ENCODE measurements at regions of chr7 and their contacts with region 1.

Region 1: DNA sequence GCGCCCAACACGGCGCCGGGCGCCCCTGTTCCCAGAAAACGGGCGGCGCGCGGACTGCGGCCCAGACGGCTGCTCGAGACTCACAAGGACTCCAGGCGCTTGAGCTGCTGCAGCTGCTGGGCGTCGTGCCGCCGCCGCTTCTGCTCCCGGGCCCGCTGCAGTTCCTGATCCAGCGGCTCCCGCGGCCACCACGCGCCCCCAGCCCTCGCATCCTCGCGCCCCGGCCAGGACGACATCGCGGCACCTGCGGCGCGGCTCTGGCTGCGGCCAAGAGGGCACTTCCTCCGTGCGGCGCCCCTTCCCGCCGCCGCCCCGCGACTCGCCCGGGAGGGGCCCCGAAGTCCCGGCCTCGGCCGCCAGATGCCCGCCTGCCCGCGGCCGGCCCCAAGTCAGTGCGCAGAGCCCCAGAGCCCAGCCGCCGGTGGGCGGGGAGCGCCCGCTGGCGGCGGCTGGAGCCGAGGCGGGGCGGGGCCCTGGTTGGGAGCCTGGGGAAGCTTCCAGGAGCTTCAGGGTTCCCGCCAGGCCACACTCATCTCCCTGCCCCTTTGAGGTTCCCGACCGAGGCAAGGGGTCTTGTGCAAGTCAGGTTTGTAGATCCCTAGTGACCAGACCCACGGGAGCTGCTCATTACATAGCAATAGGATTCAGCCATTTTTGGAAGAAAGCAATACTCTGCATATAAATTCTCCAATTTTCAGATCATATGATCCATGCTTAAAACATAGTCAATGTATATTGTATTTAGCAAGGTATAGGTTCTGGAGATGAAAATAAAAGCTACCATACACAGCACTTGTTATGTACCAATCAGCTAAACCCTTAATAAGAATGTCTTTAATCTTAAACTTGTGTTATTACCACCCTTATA is 14.2 kb upstream of the FKBP9 start:
- DNase-seq: peak; percentile 51 to 70 (median 63)
- H3K4me3 ChIP-seq: peak overlapping the region; percentile 8 to 62
- H3K4me3 Mint-ChIP-seq: peak overlapping the region; percentile 68 to 88 (median 76)
- H3K27ac ChIP-seq: peak overlapping the region; percentile 32
- H3K27ac Mint-ChIP-seq: peak overlapping the region in 3 of 7 donors; percentile 17 to 48 (median 35)
- H3K4me1 ChIP-seq: peaks cover 9% of the 10 kb centered on the region
- H3K4me1 Mint-ChIP-seq: peaks cover 5 to 11% (median 7%) of the 10 kb centered on the region in 4 donors
- H3K27me3 ChIP-seq: no peaks in the 10 kb centered on the region
- H3K27me3 Mint-ChIP-seq: peaks cover 2 to 5% of the 10 kb centered on the region in 2 donors

Region 2: DNA sequence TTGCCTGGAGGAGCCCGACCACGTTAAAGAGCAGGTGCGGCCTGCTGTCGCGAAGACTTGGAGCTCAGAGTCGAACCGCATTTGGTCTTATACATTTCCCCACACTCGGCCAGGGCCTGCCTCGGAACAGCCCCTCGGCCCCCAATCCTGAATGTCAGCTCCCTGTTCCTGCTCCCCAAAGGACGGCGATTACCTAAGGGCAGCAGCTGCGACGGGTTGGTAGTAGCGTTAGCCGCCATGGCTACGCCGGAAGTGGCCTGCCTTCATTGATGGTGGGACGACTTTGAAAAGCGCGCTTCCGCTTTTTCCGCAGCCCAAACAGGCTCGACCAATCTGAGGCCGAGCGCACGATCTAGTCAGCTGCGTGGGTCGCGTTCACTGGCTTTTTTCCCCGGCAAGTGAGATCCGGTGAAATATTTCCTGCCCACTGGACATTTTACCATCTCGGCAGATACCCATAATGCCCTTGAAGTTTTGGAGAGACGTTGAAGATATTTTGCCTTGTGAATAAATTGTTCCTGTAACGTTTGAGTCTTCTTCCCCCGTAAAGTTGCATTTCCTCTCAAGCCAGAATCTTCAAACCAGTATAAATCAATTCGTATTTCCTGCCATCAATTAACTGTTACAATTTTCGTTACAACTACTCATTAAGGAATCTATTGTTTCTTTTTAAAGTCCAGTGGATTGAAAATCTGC is 452.7 kb before region 1 on chr7 and contains the start of gene LSM5:
- CTCF ChIA-PET with region 1: interaction called, 3 read pairs
- POLR2A ChIA-PET with region 1: interaction called, 4 read pairs
- intact Hi-C with region 1: loop called (anchors 2 kb)
- DNase-seq: peak; percentile 89 to 92 (median 90)
- H3K4me3 ChIP-seq: peak within 1 kb of the TSS; percentile 67 to 96
- H3K4me3 Mint-ChIP-seq: peak within 1 kb of the TSS; percentile 82 to 96 (median 92)
- H3K27ac ChIP-seq: peak within 1 kb of the TSS; percentile 79
- H3K27ac Mint-ChIP-seq: peak within 1 kb of the TSS; percentile 92 to 97 (median 94)
- H3K4me1 ChIP-seq: peaks cover 27% of the 10 kb centered on the region
- H3K4me1 Mint-ChIP-seq: peaks cover 7 to 30% (median 22%) of the 10 kb centered on the region in 4 donors
- H3K27me3 ChIP-seq: no peaks in the 10 kb centered on the region
- H3K27me3 Mint-ChIP-seq: no peaks in the 10 kb centered on the region
- total RNA-seq, gene LSM5: 37.6 to 37.8 TPM

Region 3: DNA sequence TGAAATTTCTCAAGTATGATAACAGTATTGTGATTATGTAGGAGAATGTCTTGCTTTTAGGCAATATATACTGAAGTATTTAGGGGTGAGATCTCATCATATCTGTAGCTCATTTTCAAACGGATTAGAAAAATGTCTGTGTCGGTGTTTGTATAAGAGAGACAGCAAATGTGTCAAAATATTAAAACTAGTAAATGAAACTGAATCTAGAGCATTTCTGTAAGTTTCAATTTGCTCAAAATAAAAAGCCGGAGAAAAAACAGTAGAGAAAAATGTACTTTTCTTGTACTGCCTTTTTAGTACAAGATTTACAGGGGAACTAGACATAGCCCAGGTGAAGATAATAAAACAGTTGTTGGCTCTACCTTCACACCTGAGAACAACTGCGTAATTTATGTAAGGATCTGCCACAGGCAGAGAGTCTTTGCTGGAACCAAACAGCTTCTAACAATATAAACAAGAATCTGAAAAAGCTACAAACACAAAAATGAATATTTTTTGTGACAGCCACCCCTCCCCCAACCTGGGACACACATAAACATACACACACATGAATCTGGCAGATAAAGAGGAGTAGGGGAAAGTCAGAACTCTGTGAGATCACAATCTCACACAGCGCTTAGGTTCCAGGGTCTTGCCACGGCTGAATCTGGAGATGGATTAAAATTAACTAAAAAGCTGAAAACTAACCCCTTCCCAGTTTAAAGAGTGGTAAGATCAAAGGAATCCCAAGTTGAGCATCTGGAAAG is 294.4 kb before region 1 on chr7:
- CTCF ChIA-PET with region 1: no interaction called
- POLR2A ChIA-PET with region 1: no interaction called
- intact Hi-C with region 1: no loop called
- DNase-seq: no peak
- H3K4me3 ChIP-seq: no peak overlapping the region
- H3K4me3 Mint-ChIP-seq: no peak overlapping the region
- H3K27ac ChIP-seq: no peak overlapping the region
- H3K27ac Mint-ChIP-seq: no peak overlapping the region
- H3K4me1 ChIP-seq: no peaks in the 10 kb centered on the region
- H3K4me1 Mint-ChIP-seq: no peaks in the 10 kb centered on the region
- H3K27me3 ChIP-seq: no peaks in the 10 kb centered on the region
- H3K27me3 Mint-ChIP-seq: peaks cover 11 to 23% of the 10 kb centered on the region in 2 donors

Region 4: GRCh38 chr7:32694182-32694581 is 248.8 kb before region 1 on chr7:
- CTCF ChIA-PET with region 1: interaction called, 5 read pairs
- POLR2A ChIA-PET with region 1: no interaction called
- intact Hi-C with region 1: loop called (anchors 10 kb)
- DNase-seq: no peak
- H3K4me3 ChIP-seq: no peak overlapping the region
- H3K4me3 Mint-ChIP-seq: no peak overlapping the region
- H3K27ac ChIP-seq: no peak overlapping the region
- H3K27ac Mint-ChIP-seq: no peak overlapping the region
- H3K4me1 ChIP-seq: no peaks in the 10 kb centered on the region
- H3K4me1 Mint-ChIP-seq: peaks cover 1 to 11% (median 7%) of the 10 kb centered on the region in 4 donors
- H3K27me3 ChIP-seq: no peaks in the 10 kb centered on the region
- H3K27me3 Mint-ChIP-seq: peaks cover 0 to 7% of the 10 kb centered on the region in 2 donors

Region 5: GRCh38 chr7:32765185-32765584 is 177.8 kb before region 1 on chr7:
- CTCF ChIA-PET with region 1: interaction called, 6 read pairs
- POLR2A ChIA-PET with region 1: no interaction called
- intact Hi-C with region 1: loop called (anchors 1 kb)
- DNase-seq: no peak
- H3K4me3 ChIP-seq: no peak overlapping the region
- H3K4me3 Mint-ChIP-seq: no peak overlapping the region
- H3K27ac ChIP-seq: no peak overlapping the region
- H3K27ac Mint-ChIP-seq: no peak overlapping the region
- H3K4me1 ChIP-seq: no peaks in the 10 kb centered on the region
- H3K4me1 Mint-ChIP-seq: peaks cover 5 to 15% (median 7%) of the 10 kb centered on the region in 4 donors
- H3K27me3 ChIP-seq: peaks cover 4% of the 10 kb centered on the region
- H3K27me3 Mint-ChIP-seq: peaks cover 37 to 42% of the 10 kb centered on the region in 2 donors

Region 6: GRCh38 chr7:32803406-32804141 is 139.4 kb before region 1 on chr7:
- CTCF ChIA-PET with region 1: interaction called, 12 read pairs
- POLR2A ChIA-PET with region 1: no interaction called
- intact Hi-C with region 1: loop called (anchors 1 kb)
- DNase-seq: no peak
- H3K4me3 ChIP-seq: no peak overlapping the region
- H3K4me3 Mint-ChIP-seq: no peak overlapping the region
- H3K27ac ChIP-seq: no peak overlapping the region
- H3K27ac Mint-ChIP-seq: no peak overlapping the region
- H3K4me1 ChIP-seq: no peaks in the 10 kb centered on the region
- H3K4me1 Mint-ChIP-seq: no peaks in the 10 kb centered on the region
- H3K27me3 ChIP-seq: no peaks in the 10 kb centered on the region
- H3K27me3 Mint-ChIP-seq: peaks cover 0 to 1% of the 10 kb centered on the region in 2 donors

Region 7: GRCh38 chr7:32905175-32905662 is 37.8 kb before region 1 on chr7:
- CTCF ChIA-PET with region 1: interaction called, 19 read pairs
- POLR2A ChIA-PET with region 1: interaction called, 3 read pairs
- intact Hi-C with region 1: no loop called
- DNase-seq: peak; percentile 81 to 90 (median 87)
- H3K4me3 ChIP-seq: peak overlapping the region in 1 of 2 donors; percentile 46
- H3K4me3 Mint-ChIP-seq: peak overlapping the region; percentile 82 to 91 (median 86)
- H3K27ac ChIP-seq: peak overlapping the region; percentile 44
- H3K27ac Mint-ChIP-seq: peak overlapping the region; percentile 94 to 99 (median 98)
- H3K4me1 ChIP-seq: peaks cover 21% of the 10 kb centered on the region
- H3K4me1 Mint-ChIP-seq: peaks cover 10 to 20% (median 15%) of the 10 kb centered on the region in 4 donors
- H3K27me3 ChIP-seq: no peaks in the 10 kb centered on the region
- H3K27me3 Mint-ChIP-seq: no peaks in the 10 kb centered on the region

Region 8: DNA sequence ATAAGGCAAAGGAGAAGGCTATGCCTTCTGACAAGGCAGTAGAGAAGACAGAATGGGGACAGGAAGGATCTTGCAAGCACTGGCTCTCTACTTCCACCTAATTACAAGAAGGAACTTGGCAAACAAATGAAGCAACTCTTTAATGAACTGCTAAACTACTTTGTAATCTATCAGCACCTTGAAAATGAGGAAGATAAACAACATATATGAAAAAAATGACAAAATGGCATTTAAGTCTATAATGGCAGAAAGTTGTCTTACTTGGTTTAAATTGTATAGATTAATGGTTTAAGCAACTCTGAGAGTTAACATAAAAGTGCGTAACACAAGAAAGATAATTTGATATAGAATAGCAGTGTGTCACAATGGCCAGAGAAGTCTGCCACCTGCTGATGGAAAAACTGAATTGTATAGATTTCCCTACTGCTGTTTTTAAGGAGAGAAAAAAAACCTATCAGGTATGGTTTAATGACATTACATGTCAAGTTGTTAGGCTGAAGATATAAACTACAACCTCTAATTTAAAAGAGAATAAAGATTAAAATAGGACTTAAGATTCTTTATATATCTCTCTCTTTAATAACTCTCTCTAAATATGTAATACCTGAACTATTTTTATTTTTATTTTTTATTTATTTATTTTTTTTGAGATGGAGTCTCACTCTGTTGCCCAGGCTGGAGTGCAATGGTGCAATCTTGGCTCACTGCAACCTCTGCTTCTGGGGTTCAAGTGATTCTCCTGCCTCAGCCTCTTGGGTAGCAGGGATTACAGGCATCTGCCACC is 107.7 kb after region 1 on chr7:
- CTCF ChIA-PET with region 1: interaction called, 10 read pairs
- POLR2A ChIA-PET with region 1: no interaction called
- intact Hi-C with region 1: loop called (anchors 1 kb)
- DNase-seq: peak; percentile 41 to 61 (median 55)
- H3K4me3 ChIP-seq: no peak overlapping the region
- H3K4me3 Mint-ChIP-seq: peak overlapping the region in 1 of 8 donors; percentile 1
- H3K27ac ChIP-seq: no peak overlapping the region
- H3K27ac Mint-ChIP-seq: peak overlapping the region in 4 of 7 donors; percentile 10 to 39 (median 29)
- H3K4me1 ChIP-seq: peaks cover 50% of the 10 kb centered on the region
- H3K4me1 Mint-ChIP-seq: peaks cover 28 to 70% (median 47%) of the 10 kb centered on the region in 4 donors
- H3K27me3 ChIP-seq: no peaks in the 10 kb centered on the region
- H3K27me3 Mint-ChIP-seq: no peaks in the 10 kb centered on the region